CD8-positive, alpha-beta T cell (primary cell): ENCODE measurements at regions of chr12 and their contacts with region 1.

Region 1: GRCh38 chr12:59164991-59165718 is 244.9 kb upstream of the LRIG3 start:
- DNase-seq: no peak
- ATAC-seq: no peak
- H3K4me3 ChIP-seq: no peak overlapping the region
- H3K4me3 Mint-ChIP-seq: no peak overlapping the region
- H3K27ac ChIP-seq: no peak overlapping the region
- H3K27ac Mint-ChIP-seq: no peak overlapping the region
- H3K4me1 ChIP-seq: no peaks in the 10 kb centered on the region
- H3K4me1 Mint-ChIP-seq: no peaks in the 10 kb centered on the region
- H3K27me3 ChIP-seq: no peaks in the 10 kb centered on the region
- H3K27me3 Mint-ChIP-seq: no peaks in the 10 kb centered on the region
- CTCF ChIP-seq: no peak

Region 2: DNA sequence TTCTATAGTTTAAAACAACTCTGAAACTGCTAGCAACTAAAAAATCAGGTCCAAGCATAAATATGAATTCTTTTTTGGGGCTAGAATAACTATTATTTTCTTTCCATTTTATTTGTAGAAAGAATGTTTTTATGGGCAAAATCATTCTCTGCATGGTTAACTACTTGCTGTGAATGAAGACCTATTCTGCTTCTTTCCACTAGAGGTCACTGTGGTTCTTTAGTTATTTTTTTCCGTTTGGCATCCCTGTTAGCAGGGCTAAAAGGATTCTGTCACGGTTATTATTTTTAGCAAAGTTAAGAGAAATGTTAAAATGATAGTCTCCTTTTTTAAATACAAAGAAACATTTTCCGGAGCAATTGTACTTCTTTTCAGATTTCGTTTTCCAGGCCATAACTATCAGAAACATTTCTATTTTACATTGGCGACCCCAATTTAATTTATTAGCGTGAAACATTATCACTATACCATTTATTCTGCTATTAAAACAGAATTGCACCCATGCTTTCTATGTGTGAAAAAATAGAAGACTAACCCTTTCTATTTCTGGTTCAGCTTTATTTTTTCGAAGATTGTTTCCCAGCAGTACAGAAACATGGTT is 819.0 kb before region 1 on chr12:
- CTCF ChIA-PET with region 1: no interaction called
- POLR2A ChIA-PET with region 1: no interaction called
- intact Hi-C with region 1: loop called in 1 of 2 experiments (anchors 10 kb)
- DNase-seq: peak in 2 of 9 experiments; percentile 9 to 22
- ATAC-seq: no peak
- H3K4me3 ChIP-seq: no peak overlapping the region
- H3K4me3 Mint-ChIP-seq: no peak overlapping the region
- H3K27ac ChIP-seq: no peak overlapping the region
- H3K27ac Mint-ChIP-seq: no peak overlapping the region
- H3K4me1 ChIP-seq: no peaks in the 10 kb centered on the region
- H3K4me1 Mint-ChIP-seq: no peaks in the 10 kb centered on the region
- H3K27me3 ChIP-seq: peaks cover 0 to 2% of the 10 kb centered on the region in 2 experiments
- H3K27me3 Mint-ChIP-seq: peaks cover 14% of the 10 kb centered on the region
- CTCF ChIP-seq: peak; percentile 91

Region 3: GRCh38 chr12:58408516-58408915 is 756.6 kb before region 1 on chr12:
- CTCF ChIA-PET with region 1: no interaction called
- POLR2A ChIA-PET with region 1: no interaction called
- intact Hi-C with region 1: no loop called
- DNase-seq: no peak
- ATAC-seq: no peak
- H3K4me3 ChIP-seq: no peak overlapping the region
- H3K4me3 Mint-ChIP-seq: no peak overlapping the region
- H3K27ac ChIP-seq: no peak overlapping the region
- H3K27ac Mint-ChIP-seq: no peak overlapping the region
- H3K4me1 ChIP-seq: no peaks in the 10 kb centered on the region
- H3K4me1 Mint-ChIP-seq: no peaks in the 10 kb centered on the region
- H3K27me3 ChIP-seq: no peaks in the 10 kb centered on the region
- H3K27me3 Mint-ChIP-seq: peaks cover 10% of the 10 kb centered on the region
- CTCF ChIP-seq: no peak